PC-9 (cell line): ENCODE measurements at regions of chr17 and their contacts with region 1.

Region 1: GRCh38 chr17:3893003-3893719 is at the start of gene CAMKK1:
- DNase-seq: peak; percentile 68 to 95
- H3K4me3 ChIP-seq: peak within 1 kb of the TSS; percentile 94
- H3K27ac ChIP-seq: no peak within 1 kb of the TSS
- H3K4me1 ChIP-seq: peaks cover 65% of the 10 kb centered on the region
- H3K27me3 ChIP-seq: no peaks in the 10 kb centered on the region
- CTCF ChIP-seq: no peak
- total RNA-seq, gene CAMKK1: 16.3 and 19.5 TPM in 2 replicates

Region 2: DNA sequence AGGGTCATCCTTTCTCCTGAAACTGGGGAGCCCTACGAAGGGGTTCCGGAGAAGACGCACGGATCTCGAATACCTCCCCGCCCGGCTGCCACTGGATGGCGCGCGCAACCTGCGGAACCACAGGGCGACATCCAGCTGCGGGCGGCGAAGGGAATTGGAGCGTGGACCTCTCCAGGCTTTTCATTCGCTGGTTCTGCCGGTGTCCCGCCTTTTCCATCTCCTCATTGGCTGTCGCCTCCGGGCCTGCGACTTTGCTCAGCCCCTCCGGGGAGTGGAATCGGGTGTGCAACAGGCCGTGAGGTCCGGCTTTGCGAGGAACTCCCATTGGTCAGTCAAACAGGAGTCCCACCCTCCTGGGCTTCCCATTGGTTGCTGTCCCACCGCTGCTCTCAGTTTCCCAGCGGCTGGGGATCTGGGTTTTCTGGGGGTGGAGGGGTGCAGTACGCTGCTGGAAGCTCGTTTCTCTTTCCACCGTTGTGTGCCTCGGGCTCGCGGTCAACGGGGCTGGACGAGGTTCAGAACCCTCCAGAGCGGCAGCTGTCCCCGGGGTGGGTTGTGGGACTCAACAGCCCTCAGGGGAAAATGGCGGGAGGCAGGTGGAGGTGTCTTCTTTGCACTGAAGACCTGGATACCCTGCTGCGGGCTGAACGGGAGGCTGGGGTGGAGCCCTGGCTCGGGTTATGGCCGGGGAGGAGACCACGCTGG is 844.2 kb before region 1 on chr17:
- CTCF ChIA-PET with region 1: no interaction called
- POLR2A ChIA-PET with region 1: no interaction called
- intact Hi-C with region 1: loop called (anchors 10 kb)
- DNase-seq: peak; percentile 88 to 94
- H3K4me3 ChIP-seq: peak overlapping the region; percentile 83
- H3K27ac ChIP-seq: no peak overlapping the region
- H3K4me1 ChIP-seq: no peaks in the 10 kb centered on the region; the same call in 1 of the 2 replicates
- H3K27me3 ChIP-seq: no peaks in the 10 kb centered on the region
- CTCF ChIP-seq: peak; percentile 78

Region 3: DNA sequence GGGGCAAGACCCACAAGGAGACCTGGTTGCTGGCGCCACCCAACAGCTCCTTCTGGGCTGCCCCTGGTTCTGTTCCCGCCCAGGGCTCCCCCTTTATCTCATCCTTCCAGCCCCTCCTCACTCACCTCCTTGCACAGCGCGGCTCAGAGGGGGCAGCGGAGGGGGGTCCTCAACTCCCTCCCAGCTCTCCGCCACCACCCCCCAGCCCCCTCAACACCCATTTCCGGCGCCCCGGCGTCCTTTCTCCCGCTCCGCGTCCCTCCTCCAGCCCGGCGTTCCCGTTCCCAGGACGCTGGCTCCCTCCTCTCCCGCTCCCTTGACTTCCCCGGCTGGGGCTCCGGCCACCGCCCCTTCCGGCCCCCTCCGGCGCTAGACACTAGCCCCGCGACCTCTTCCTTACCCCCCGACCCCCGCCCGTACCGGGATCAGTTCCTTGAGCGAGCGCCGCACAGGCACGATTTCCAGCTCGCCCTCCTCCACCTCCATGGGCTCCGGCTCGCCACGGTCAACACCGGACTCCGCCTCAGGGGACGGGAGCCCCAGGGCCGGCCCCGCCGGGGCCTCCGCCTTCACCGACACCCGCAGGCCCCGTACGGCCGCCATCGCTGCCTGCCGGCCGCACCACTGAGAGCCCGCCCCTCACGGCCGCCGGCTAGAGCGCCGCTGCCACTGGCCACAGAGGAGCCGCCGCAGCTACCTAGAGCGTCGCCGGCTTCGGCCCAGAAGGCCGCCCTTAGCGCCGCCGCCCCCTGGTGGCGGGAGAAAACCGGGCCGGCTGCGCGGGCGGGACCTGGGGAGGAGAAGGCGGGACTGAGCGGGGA is 47.3 kb before region 1 on chr17 and contains the start of gene NCBP3:
- CTCF ChIA-PET with region 1: interaction called, 7 read pairs
- POLR2A ChIA-PET with region 1: no interaction called
- intact Hi-C with region 1: loop called (anchors 5 kb)
- DNase-seq: peak; percentile 83 to 94
- H3K4me3 ChIP-seq: peak within 1 kb of the TSS; percentile 97
- H3K27ac ChIP-seq: peak within 1 kb of the TSS; percentile 51
- H3K4me1 ChIP-seq: peaks cover 10% of the 10 kb centered on the region
- H3K27me3 ChIP-seq: no peaks in the 10 kb centered on the region
- CTCF ChIP-seq: peak; percentile 95
- total RNA-seq, gene NCBP3: 48.2 and 58.5 TPM in 2 replicates

Region 4: GRCh38 chr17:3959295-3959925 is 66.2 kb after region 1 on chr17:
- CTCF ChIA-PET with region 1: no interaction called
- POLR2A ChIA-PET with region 1: interaction called, 4 read pairs
- intact Hi-C with region 1: loop called (anchors 5 kb)
- DNase-seq: peak; percentile 80 to 84
- H3K4me3 ChIP-seq: no peak overlapping the region
- H3K27ac ChIP-seq: no peak overlapping the region; the same call in 1 of the 2 replicates
- H3K4me1 ChIP-seq: peaks cover 20% of the 10 kb centered on the region
- H3K27me3 ChIP-seq: no peaks in the 10 kb centered on the region
- CTCF ChIP-seq: no peak

Region 5: GRCh38 chr17:3990386-3991127 is 97.4 kb after region 1 on chr17:
- CTCF ChIA-PET with region 1: no interaction called
- POLR2A ChIA-PET with region 1: no interaction called
- intact Hi-C with region 1: no loop called
- DNase-seq: no peak
- H3K4me3 ChIP-seq: no peak overlapping the region
- H3K27ac ChIP-seq: no peak overlapping the region
- H3K4me1 ChIP-seq: no peaks in the 10 kb centered on the region
- H3K27me3 ChIP-seq: peaks cover 23% of the 10 kb centered on the region
- CTCF ChIP-seq: no peak

Region 6: DNA sequence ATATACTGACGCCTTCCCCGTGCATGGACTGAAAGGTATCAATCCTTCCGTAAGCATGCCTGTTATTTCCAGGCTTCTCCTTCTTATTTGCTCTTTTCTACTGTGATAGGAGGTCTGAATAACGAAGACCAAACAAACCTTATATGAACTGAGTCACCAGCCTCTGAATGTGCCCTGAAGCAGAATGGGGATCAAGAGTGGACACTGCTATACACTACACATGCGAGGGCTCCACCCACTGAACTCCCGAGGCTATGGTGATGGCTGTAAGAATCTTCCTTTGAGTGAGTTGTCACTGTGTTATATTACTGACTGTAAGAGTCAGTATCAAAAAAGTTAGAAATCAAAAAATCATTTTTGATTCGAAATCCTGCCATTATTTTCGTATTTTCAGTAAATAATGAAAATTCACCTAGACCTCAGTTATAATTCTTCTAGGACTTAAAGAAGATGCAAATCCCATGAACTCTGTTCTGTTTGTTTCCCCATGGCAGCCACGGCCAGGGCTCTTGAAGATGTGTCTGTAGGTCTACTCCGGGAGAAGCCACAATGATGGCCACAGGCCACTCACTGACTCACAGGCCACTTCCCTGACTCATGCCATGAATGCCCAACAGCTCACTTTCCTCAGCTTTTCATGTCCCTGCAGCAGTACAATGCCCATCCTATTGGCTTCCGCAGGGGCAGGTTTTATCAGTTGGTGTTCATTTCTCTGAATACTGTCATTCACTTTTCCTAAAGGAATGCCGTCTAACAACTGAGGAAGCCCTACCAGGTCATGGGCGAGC is 194.9 kb after region 1 on chr17:
- CTCF ChIA-PET with region 1: no interaction called
- POLR2A ChIA-PET with region 1: interaction called, 21 read pairs
- intact Hi-C with region 1: no loop called
- DNase-seq: peak in 1 of 2 experiments; percentile 40
- H3K4me3 ChIP-seq: no peak overlapping the region
- H3K27ac ChIP-seq: no peak overlapping the region
- H3K4me1 ChIP-seq: no peaks in the 10 kb centered on the region
- H3K27me3 ChIP-seq: no peaks in the 10 kb centered on the region
- CTCF ChIP-seq: no peak

Region 7: DNA sequence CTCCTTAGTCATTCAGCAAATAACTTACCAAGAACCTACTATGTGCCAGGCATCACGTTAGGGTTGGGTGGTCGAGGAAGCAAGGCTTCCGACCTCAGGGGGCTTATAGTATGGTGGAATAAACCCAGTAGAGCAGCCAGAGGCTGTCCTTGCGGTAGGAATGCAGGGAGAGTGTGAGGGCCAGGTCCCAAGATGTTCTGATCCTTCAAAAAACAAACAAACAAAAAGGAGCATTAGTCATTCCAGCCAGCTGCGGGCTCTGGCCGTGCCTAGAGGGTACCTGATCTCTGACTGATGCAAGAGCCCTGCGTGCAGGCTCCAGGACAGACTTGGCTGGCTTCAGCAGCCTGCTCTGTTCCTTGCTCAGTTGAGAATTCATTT is 268.0 kb after region 1 on chr17:
- CTCF ChIA-PET with region 1: no interaction called
- POLR2A ChIA-PET with region 1: no interaction called
- intact Hi-C with region 1: loop called (anchors 10 kb)
- DNase-seq: peak; percentile 91 to 96
- H3K4me3 ChIP-seq: peak overlapping the region; percentile 45
- H3K27ac ChIP-seq: peak overlapping the region; percentile 95
- H3K4me1 ChIP-seq: peaks cover 48% of the 10 kb centered on the region
- H3K27me3 ChIP-seq: no peaks in the 10 kb centered on the region
- CTCF ChIP-seq: peak; percentile 55